MCF 10A (cell line): ENCODE measurements at regions of chr12 and their contacts with region 1.

Region 1: GRCh38 chr12:56117778-56118687 is at the start of gene ZC3H10:
- DNase-seq: peak; percentile 99
- H3K4me3 Mint-ChIP-seq: peak within 1 kb of the TSS; percentile 95
- H3K27ac Mint-ChIP-seq: peak within 1 kb of the TSS; percentile 100
- H3K4me1 Mint-ChIP-seq: peaks cover 18% of the 10 kb centered on the region
- H3K27me3 Mint-ChIP-seq: no peaks in the 10 kb centered on the region
- CTCF ChIP-seq: peak; percentile 21
- total RNA-seq, gene ZC3H10: 2.8 and 3.5 TPM in 2 replicates

Region 2: DNA sequence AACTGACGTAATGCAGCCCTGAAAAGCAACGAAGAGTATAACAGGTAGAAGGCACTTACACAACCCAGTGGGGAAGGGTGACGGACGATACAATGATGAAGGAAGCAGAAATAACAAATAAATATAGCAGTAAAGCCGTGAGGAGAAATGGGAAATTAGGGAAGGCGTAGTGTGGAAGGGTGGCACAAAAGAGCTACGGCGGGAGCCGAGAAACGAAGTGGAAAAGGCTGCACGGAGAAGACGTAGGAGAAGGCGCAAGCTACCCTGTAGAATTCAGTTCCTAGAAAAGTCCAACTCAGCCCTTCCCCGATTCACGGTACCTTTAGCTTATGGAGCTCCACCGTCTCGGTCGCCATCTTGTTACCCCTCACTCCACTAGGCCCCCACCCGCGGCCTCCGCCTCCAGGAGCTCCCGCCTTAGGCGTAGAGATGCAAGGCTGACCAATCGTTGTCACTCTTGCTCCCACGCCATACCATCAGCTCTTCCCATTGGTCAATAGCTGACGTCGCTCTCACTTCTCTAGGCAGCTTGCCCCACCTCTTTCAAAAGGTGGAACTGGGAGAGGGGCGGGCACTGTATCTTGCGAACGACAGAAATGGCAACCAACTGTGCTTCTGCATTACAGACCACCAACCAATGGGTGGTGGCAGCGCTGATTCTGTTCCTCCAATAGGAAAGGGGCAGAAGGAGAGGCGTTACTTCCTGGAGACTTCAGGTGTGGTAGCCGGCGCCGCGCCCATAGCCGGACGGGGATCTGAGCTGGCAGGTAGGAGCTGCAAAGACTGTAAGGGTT is 300.5 kb before region 1 on chr12 and contains the starts of genes ORMDL2 and SARNP:
- CTCF ChIA-PET with region 1: no interaction called
- POLR2A ChIA-PET with region 1: interaction called, 22 read pairs
- intact Hi-C with region 1: no loop called
- DNase-seq: peak; percentile 100
- H3K4me3 Mint-ChIP-seq: no peak within 1 kb of the TSS
- H3K27ac Mint-ChIP-seq: no peak within 1 kb of the TSS
- H3K4me1 Mint-ChIP-seq: peaks cover 19% of the 10 kb centered on the region
- H3K27me3 Mint-ChIP-seq: no peaks in the 10 kb centered on the region
- CTCF ChIP-seq: no peak
- total RNA-seq, gene ORMDL2: 54.6 and 55.9 TPM in 2 replicates
- total RNA-seq, gene SARNP: 39.2 and 61.1 TPM in 2 replicates

Region 3: GRCh38 chr12:55847603-55848291 is 270.3 kb before region 1 on chr12:
- CTCF ChIA-PET with region 1: no interaction called
- POLR2A ChIA-PET with region 1: no interaction called
- intact Hi-C with region 1: no loop called
- DNase-seq: peak; percentile 97
- H3K4me3 Mint-ChIP-seq: peak overlapping the region; percentile 52
- H3K27ac Mint-ChIP-seq: peak overlapping the region; percentile 99
- H3K4me1 Mint-ChIP-seq: peaks cover 20% of the 10 kb centered on the region
- H3K27me3 Mint-ChIP-seq: no peaks in the 10 kb centered on the region
- CTCF ChIP-seq: no peak

Region 4: DNA sequence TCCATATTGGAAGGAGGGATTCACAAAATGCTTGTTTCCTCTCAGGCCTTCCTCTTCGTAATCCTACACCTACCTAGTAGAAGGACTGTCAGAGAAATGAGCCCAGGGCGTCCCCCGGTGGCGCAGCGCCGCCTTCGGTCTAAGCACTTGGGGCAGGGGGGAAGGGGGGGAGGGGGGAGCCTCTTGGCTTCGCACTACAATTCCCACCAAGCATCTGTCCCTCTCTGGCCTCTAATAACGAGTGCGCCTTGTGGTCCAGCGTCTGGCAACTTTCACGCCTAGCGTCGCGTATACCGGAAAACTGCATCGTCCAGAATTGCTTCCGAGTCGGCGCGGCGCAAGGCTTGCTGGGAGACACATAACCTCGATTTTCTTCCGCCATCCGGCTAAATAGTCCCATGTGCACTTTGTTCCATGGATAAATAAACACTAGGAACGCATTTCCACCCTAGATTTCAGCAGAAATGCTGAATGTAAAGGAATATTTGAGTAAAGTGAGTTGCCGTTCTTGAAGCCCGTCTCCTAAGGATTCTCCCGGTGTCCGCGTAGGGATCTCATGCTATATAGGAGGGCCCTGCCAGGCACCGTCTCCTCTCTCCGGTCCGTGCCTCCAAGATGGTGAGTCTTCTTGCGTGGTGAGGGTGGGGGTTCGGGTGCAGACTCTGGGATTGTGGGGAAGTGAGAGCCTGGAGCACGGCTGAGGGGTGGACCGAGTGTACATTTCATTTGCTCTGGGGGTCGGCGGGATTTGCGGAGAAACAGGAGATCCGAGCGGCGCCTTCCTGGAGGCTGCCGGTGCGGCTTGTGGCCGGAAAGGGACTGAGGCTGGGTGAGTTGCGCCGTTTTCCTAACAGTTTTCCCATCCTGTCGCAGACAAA is 76.2 kb before region 1 on chr12 and contains the start of gene RPS26:
- CTCF ChIA-PET with region 1: interaction called, 8 read pairs
- POLR2A ChIA-PET with region 1: interaction called, 48 read pairs
- intact Hi-C with region 1: no loop called
- DNase-seq: peak; percentile 99
- H3K4me3 Mint-ChIP-seq: peak within 1 kb of the TSS; percentile 81
- H3K27ac Mint-ChIP-seq: peak within 1 kb of the TSS; percentile 91
- H3K4me1 Mint-ChIP-seq: peaks cover 7% of the 10 kb centered on the region
- H3K27me3 Mint-ChIP-seq: no peaks in the 10 kb centered on the region
- CTCF ChIP-seq: peak; percentile 33
- total RNA-seq, gene RPS26: 45.1 and 67.3 TPM in 2 replicates

Region 5: GRCh38 chr12:56127888-56128669 is 10.0 kb after region 1 on chr12 and contains the start of gene ESYT1:
- CTCF ChIA-PET with region 1: interaction called, 11 read pairs
- POLR2A ChIA-PET with region 1: interaction called, 165 read pairs
- intact Hi-C with region 1: no loop called
- DNase-seq: peak; percentile 100
- H3K4me3 Mint-ChIP-seq: peak within 1 kb of the TSS; percentile 84
- H3K27ac Mint-ChIP-seq: peak within 1 kb of the TSS; percentile 84
- H3K4me1 Mint-ChIP-seq: peaks cover 26% of the 10 kb centered on the region
- H3K27me3 Mint-ChIP-seq: no peaks in the 10 kb centered on the region
- CTCF ChIP-seq: no peak
- total RNA-seq, gene ESYT1: 111 and 123 TPM in 2 replicates

Region 6: DNA sequence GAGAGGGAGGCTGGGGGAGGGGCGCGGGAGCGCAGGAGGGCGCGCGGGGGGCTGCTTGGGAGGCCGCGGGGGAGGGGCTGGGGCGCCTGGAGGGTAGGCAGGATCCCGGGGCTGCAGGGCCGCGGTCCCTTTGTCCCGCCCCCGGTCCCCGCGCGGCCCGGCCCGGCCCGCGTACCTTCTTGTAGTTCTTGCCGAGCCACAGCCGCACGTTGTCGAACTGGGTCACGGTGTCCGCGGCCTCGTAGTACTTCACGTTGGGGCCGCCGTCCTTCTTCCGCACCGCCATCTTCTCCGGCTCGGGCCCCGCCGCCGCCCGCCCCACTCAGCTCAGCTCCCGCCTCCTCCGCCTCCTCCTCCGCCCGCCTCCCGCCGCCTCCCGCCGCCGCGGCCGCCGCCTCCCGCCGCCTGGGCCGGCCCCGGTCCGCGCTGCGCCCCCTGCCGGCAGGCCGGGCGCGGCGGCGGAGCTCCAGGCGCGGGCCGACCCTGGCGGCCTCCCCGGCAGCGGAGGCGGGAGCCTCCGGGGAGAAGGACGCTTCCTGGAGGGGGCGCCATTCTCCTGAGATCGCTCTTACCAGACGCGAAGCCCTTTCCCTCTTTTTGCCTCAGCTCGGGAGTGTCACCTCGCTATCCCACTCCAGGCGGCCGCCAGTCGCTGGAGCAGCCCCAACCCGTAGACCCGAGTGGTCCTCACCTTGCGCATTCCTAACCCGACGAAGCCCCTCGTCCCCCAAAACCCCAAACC is 71.3 kb after region 1 on chr12 and contains the start of gene SMARCC2:
- CTCF ChIA-PET with region 1: interaction called, 57 read pairs
- POLR2A ChIA-PET with region 1: interaction called, 140 read pairs
- intact Hi-C with region 1: loop called (anchors 1 kb)
- DNase-seq: peak; percentile 87
- H3K4me3 Mint-ChIP-seq: peak within 1 kb of the TSS; percentile 85
- H3K27ac Mint-ChIP-seq: peak within 1 kb of the TSS; percentile 93
- H3K4me1 Mint-ChIP-seq: peaks cover 38% of the 10 kb centered on the region
- H3K27me3 Mint-ChIP-seq: no peaks in the 10 kb centered on the region
- CTCF ChIP-seq: peak; percentile 75
- total RNA-seq, gene SMARCC2: 52.1 and 57.0 TPM in 2 replicates

Region 7: GRCh38 chr12:56315622-56316473 is 197.8 kb after region 1 on chr12 and contains the start of gene CNPY2:
- CTCF ChIA-PET with region 1: no interaction called
- POLR2A ChIA-PET with region 1: interaction called, 10 read pairs
- intact Hi-C with region 1: no loop called
- DNase-seq: peak; percentile 99
- H3K4me3 Mint-ChIP-seq: peak within 1 kb of the TSS; percentile 96
- H3K27ac Mint-ChIP-seq: peak within 1 kb of the TSS; percentile 98
- H3K4me1 Mint-ChIP-seq: no peaks in the 10 kb centered on the region
- H3K27me3 Mint-ChIP-seq: no peaks in the 10 kb centered on the region
- CTCF ChIP-seq: no peak
- total RNA-seq, gene CNPY2: 169 and 210 TPM in 2 replicates